ENCODE measurements at regions of chrX and their contacts with region 1.

Region 1: GRCh38 chrX:88560673-88561330 is 186.2 kb upstream of the CPXCR1 start:
- DNase-seq: peak; percentile 49 to 56
- H3K4me3 ChIP-seq: no peak overlapping the region
- H3K4me3 Mint-ChIP-seq: peak overlapping the region; percentile 61
- H3K27ac Mint-ChIP-seq: peak overlapping the region; percentile 83
- H3K4me1 ChIP-seq: peaks cover 16% of the 10 kb centered on the region
- H3K4me1 Mint-ChIP-seq: peaks cover 5% of the 10 kb centered on the region
- H3K27me3 ChIP-seq: no peaks in the 10 kb centered on the region
- H3K27me3 Mint-ChIP-seq: no peaks in the 10 kb centered on the region
- CTCF ChIP-seq: no peak

Region 2: GRCh38 chrX:88135735-88136134 is 425.1 kb before region 1 on chrX:
- CTCF ChIA-PET with region 1: no interaction called
- POLR2A ChIA-PET with region 1: no interaction called
- intact Hi-C with region 1: no loop called
- DNase-seq: peak in 1 of 2 experiments; percentile 1
- H3K4me3 ChIP-seq: no peak overlapping the region
- H3K4me3 Mint-ChIP-seq: no peak overlapping the region
- H3K27ac Mint-ChIP-seq: no peak overlapping the region
- H3K4me1 ChIP-seq: no peaks in the 10 kb centered on the region
- H3K4me1 Mint-ChIP-seq: no peaks in the 10 kb centered on the region
- H3K27me3 ChIP-seq: no peaks in the 10 kb centered on the region
- H3K27me3 Mint-ChIP-seq: no peaks in the 10 kb centered on the region
- CTCF ChIP-seq: peak in 1 of 2 experiments; percentile 15

Region 3: DNA sequence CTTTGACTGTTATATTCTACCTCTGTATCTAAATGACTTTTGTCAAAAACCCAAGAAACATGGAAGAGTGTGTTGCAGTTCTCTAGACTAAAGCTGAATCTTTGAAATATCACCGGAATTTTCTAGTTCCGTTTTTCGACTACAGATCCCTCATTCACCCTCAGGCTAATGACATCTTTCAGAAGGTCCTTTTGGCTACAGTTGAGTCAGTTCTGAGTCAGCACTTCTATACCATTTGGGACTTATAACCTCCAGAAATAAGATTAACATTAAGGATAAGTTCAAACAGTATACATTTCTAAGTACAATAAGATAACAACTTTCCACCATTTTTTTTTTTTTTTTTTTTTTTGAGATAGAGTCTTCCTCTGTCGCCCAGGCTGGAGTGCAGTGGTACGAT is 144.8 kb before region 1 on chrX:
- CTCF ChIA-PET with region 1: no interaction called
- POLR2A ChIA-PET with region 1: no interaction called
- intact Hi-C with region 1: no loop called
- DNase-seq: no peak
- H3K4me3 ChIP-seq: no peak overlapping the region
- H3K4me3 Mint-ChIP-seq: no peak overlapping the region
- H3K27ac Mint-ChIP-seq: no peak overlapping the region
- H3K4me1 ChIP-seq: no peaks in the 10 kb centered on the region
- H3K4me1 Mint-ChIP-seq: no peaks in the 10 kb centered on the region
- H3K27me3 ChIP-seq: no peaks in the 10 kb centered on the region
- H3K27me3 Mint-ChIP-seq: no peaks in the 10 kb centered on the region
- CTCF ChIP-seq: no peak

Region 4: DNA sequence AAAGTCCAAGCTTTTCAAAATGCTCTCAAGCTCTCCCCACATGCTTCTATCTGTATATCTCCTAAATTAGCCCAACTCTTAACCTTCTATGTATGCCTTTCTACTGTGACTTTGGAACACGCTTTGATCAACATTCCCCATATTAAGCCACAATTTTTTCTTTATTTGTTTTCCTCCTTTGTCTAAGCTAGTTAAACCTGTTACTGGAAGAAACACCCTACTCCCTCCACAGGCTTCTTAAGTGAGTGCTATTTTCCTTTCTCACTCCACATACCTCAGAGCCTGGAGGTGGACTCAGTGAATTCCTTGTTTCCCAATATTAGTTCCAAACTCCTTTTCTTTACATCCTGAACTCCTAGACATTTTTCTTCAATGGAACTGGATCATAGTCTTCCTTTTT is 117.5 kb before region 1 on chrX:
- CTCF ChIA-PET with region 1: no interaction called
- POLR2A ChIA-PET with region 1: no interaction called
- intact Hi-C with region 1: loop called (anchors 5 kb)
- DNase-seq: peak in 1 of 2 experiments; percentile 7
- H3K4me3 ChIP-seq: no peak overlapping the region
- H3K4me3 Mint-ChIP-seq: no peak overlapping the region
- H3K27ac Mint-ChIP-seq: peak overlapping the region; percentile 68
- H3K4me1 ChIP-seq: peaks cover 5% of the 10 kb centered on the region; the same call in 1 of the 2 replicates
- H3K4me1 Mint-ChIP-seq: peaks cover 15% of the 10 kb centered on the region
- H3K27me3 ChIP-seq: no peaks in the 10 kb centered on the region
- H3K27me3 Mint-ChIP-seq: no peaks in the 10 kb centered on the region
- CTCF ChIP-seq: no peak

Region 5: GRCh38 chrX:88604433-88605221 is 43.8 kb after region 1 on chrX:
- CTCF ChIA-PET with region 1: no interaction called
- POLR2A ChIA-PET with region 1: no interaction called
- intact Hi-C with region 1: loop called (anchors 1 kb)
- DNase-seq: peak; percentile 70 to 84
- H3K4me3 ChIP-seq: no peak overlapping the region
- H3K4me3 Mint-ChIP-seq: peak overlapping the region; percentile 69
- H3K27ac Mint-ChIP-seq: peak overlapping the region; percentile 79
- H3K4me1 ChIP-seq: peaks cover 31% of the 10 kb centered on the region
- H3K4me1 Mint-ChIP-seq: no peaks in the 10 kb centered on the region
- H3K27me3 ChIP-seq: no peaks in the 10 kb centered on the region
- H3K27me3 Mint-ChIP-seq: no peaks in the 10 kb centered on the region
- CTCF ChIP-seq: no peak